Heart right ventricle (tissue), 16 donors: ENCODE measurements at regions of chr14 and their contacts with region 1.

Region 1: GRCh38 chr14:95319312-95320021 is at the start of gene CLMN:
- DNase-seq: peak; percentile 21 to 44
- ATAC-seq: peak; percentile 30 to 78 (median 44)
- H3K4me3 ChIP-seq: peak within 1 kb of the TSS; percentile 77 to 96 (median 89)
- H3K27ac ChIP-seq: peak within 1 kb of the TSS; percentile 73 to 88 (median 83)
- H3K4me1 ChIP-seq: peaks cover 0 to 52% (median 19%) of the 10 kb centered on the region in 9 donors
- H3K27me3 ChIP-seq: peaks cover 0 to 13% (median 0%) of the 10 kb centered on the region in 7 donors
- CTCF ChIP-seq: no peak
- total RNA-seq, gene CLMN: 3.7 to 14.5 (median 5.9) TPM

Region 2: GRCh38 chr14:95361373-95362137 is 42.1 kb after region 1 on chr14:
- intact Hi-C with region 1: loop called in 1 of 10 experiments (anchors 5 kb)
- DNase-seq: peak; percentile 34 to 49
- ATAC-seq: peak in 7 of 8 donors; percentile 45 to 71 (median 57)
- H3K4me3 ChIP-seq: no peak overlapping the region
- H3K27ac ChIP-seq: peak overlapping the region in 5 of 10 donors; percentile 5 to 56 (median 38)
- H3K4me1 ChIP-seq: peaks cover 0 to 42% (median 4%) of the 10 kb centered on the region in 9 donors
- H3K27me3 ChIP-seq: peaks cover 0 to 49% (median 27%) of the 10 kb centered on the region in 7 donors
- CTCF ChIP-seq: peak; percentile 25 to 79 (median 59)

Region 3: DNA sequence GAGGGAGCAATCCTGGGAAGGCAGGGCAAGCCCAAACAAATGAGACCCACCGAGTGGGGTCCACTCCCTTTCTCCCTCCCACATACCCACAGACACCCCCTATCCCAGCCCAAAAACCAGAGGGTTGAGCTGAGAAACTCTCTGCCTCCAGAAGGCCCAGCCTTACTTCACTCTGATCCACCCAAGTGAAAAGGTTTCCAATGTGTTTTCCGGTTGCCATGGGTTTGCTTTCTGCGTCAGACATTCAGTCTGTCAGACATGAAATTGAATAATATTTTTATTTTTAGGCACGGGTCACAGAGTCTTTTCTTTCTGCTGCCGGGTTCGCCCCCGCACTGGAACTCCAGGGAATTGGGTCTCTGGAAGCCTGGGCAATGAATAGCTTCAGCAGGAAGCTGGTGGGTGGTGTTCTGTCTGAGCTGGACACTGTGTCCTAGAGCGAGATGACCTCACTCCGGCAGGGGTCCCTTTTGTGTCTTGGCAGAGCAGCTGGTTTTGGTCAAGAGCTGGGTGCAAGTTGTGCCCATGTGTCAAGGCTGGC is 70.1 kb after region 1 on chr14:
- intact Hi-C with region 1: loop called in 1 of 10 experiments (anchors 2 kb)
- DNase-seq: peak; percentile 77 to 93
- ATAC-seq: peak; percentile 88 to 97 (median 96)
- H3K4me3 ChIP-seq: no peak overlapping the region
- H3K27ac ChIP-seq: peak overlapping the region; percentile 72 to 94 (median 83)
- H3K4me1 ChIP-seq: peaks cover 10 to 34% (median 15%) of the 10 kb centered on the region in 9 donors
- H3K27me3 ChIP-seq: peaks cover 0 to 4% (median 0%) of the 10 kb centered on the region in 7 donors
- CTCF ChIP-seq: no peak

Region 4: GRCh38 chr14:95408731-95409476 is 89.4 kb after region 1 on chr14:
- intact Hi-C with region 1: loop called in 1 of 10 experiments (anchors 5 kb)
- DNase-seq: peak in 1 of 2 donors; percentile 29
- ATAC-seq: peak in 7 of 8 donors; percentile 24 to 75 (median 65)
- H3K4me3 ChIP-seq: no peak overlapping the region
- H3K27ac ChIP-seq: peak overlapping the region in 9 of 10 donors; percentile 56 to 78 (median 71)
- H3K4me1 ChIP-seq: peaks cover 6 to 40% (median 17%) of the 10 kb centered on the region in 9 donors
- H3K27me3 ChIP-seq: no peaks in the 10 kb centered on the region
- CTCF ChIP-seq: no peak

Region 5: GRCh38 chr14:95424529-95424928 is 105.1 kb after region 1 on chr14:
- intact Hi-C with region 1: loop called in 1 of 10 experiments (anchors 10 kb)
- DNase-seq: no peak
- ATAC-seq: peak in 4 of 8 donors; percentile 20 to 53 (median 42)
- H3K4me3 ChIP-seq: no peak overlapping the region
- H3K27ac ChIP-seq: no peak overlapping the region
- H3K4me1 ChIP-seq: peaks cover 0 to 4% (median 0%) of the 10 kb centered on the region in 9 donors
- H3K27me3 ChIP-seq: no peaks in the 10 kb centered on the region
- CTCF ChIP-seq: no peak